Posterior vena cava (tissue), 2 donors: ENCODE measurements at regions of chr16 and their contacts with region 1.

Region 1: DNA sequence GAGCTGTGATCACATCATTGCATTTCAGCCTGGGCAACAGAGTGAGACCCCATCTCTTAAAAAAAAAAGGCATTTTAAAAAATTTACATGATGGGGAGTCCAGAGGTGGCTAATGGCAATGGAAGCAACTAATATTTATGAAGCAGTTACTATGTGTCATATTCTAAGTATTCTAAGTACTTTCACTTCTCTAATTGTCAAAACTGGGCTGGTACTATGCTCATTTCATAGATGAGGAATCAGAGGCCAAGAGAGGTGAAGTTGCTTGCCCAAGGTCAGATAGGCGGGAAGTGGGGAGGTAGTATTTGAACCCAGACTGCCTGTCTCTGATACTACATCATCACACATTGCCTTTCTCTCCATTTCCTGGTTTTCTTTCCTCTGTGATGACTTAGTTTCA is 50.7 kb downstream of the SLC5A11 start:
- DNase-seq: peak; percentile 2

Region 2: GRCh38 chr16:24834459-24835335 is 61.7 kb before region 1 on chr16:
- intact Hi-C with region 1: no loop called
- DNase-seq: no peak

Region 3: DNA sequence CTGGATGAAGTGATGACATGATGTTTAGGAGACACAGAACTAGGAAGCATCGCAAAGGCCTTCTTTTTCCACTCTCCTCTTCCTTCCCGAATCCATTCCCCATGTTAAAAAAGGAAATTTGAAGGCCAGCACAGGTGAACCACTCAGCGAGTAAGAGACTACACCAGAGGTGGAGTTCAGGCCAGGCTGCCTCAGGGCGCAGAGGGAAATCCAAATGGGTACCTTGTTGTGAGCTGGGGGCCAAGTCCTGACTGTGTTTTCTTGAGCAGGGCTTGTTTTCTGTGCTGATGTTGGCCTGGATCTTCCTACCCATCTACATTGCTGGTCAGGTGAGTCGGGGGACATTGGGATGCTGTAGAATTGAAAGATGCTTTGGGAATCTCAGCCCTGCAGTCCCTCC is 24.5 kb before region 1 on chr16:
- intact Hi-C with region 1: loop called in 1 of 2 experiments (anchors 1 kb)
- DNase-seq: no peak